HCT116 (cell line): ENCODE measurements at regions of chr12 and their contacts with region 1.

Region 1: DNA sequence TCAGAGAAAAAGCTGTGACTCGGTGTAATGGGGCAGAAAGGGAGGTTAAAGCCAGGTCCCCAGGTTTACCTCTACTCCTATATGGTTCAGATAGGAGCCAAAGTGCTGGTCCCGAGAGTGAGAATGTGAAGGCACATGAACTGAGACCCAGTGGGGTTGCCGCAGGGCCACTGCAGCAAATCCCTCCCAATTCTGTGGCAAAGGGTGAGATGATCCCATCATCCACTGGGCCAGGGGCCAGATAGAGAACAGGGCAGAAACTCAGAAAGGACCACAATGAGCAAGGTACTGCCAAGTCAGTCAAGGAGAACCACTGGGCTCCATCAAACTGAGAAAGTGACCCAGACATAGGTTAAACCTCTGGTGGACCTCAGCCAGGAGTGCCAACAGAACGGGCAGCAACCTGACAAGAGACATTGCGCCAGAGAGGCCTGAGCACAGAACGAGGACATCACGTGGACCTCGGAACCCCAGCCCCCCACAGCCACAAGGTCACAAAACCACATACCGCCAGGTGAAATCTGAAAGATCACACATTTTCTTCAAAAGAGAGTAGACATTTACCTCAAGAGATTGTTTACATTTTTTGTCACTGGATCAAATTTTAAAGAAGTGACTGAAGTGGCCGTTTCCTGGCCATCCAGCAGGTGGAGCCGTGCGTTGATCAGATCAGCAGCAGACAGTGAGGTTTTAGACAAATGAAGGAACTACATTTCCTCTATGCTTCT is 20.5 kb upstream of the ITPR2 start:
- DNase-seq: no peak
- ATAC-seq: peak; percentile 96
- H3K4me3 ChIP-seq: no peak overlapping the region
- H3K27ac ChIP-seq: no peak overlapping the region
- H3K4me1 ChIP-seq: 0 out of 4 replicates have a peak, but pooled peaks cover 0 to 3% of the 10 kb centered on the region in 2 experiments
- H3K27me3 ChIP-seq: no peaks in the 10 kb centered on the region
- CTCF ChIP-seq: peak; percentile 84 to 93 (median 91)
- POLR2A ChIP-seq: no peak
- RAD21 ChIP-seq: peak; percentile 75

Region 2: GRCh38 chr12:26884765-26885576 is 31.5 kb after region 1 on chr12:
- CTCF ChIA-PET with region 1: interaction called, 5 read pairs
- POLR2A ChIA-PET with region 1: no interaction called
- RAD21 ChIA-PET with region 1: no interaction called
- intact Hi-C with region 1: loop called (anchors 2 kb)
- DNase-seq: peak; percentile 51
- ATAC-seq: peak; percentile 97
- H3K4me3 ChIP-seq: no peak overlapping the region
- H3K27ac ChIP-seq: no peak overlapping the region
- H3K4me1 ChIP-seq: peaks cover 2 to 7% of the 10 kb centered on the region in 2 experiments; a peak in 2 of 4 replicates
- H3K27me3 ChIP-seq: no peaks in the 10 kb centered on the region
- CTCF ChIP-seq: peak; percentile 77 to 97 (median 88)
- POLR2A ChIP-seq: no peak
- RAD21 ChIP-seq: peak; percentile 75

Region 3: GRCh38 chr12:27142101-27142721 is 288.7 kb after region 1 on chr12:
- CTCF ChIA-PET with region 1: no interaction called
- POLR2A ChIA-PET with region 1: no interaction called
- RAD21 ChIA-PET with region 1: no interaction called
- intact Hi-C with region 1: loop called (anchors 5 kb)
- DNase-seq: peak; percentile 60
- ATAC-seq: peak; percentile 98
- H3K4me3 ChIP-seq: no peak overlapping the region
- H3K27ac ChIP-seq: no peak overlapping the region
- H3K4me1 ChIP-seq: no peaks in the 10 kb centered on the region
- H3K27me3 ChIP-seq: no peaks in the 10 kb centered on the region
- CTCF ChIP-seq: peak; percentile 62 to 86 (median 85); a peak in 5 of 6 replicates
- POLR2A ChIP-seq: no peak
- RAD21 ChIP-seq: peak; percentile 75

Region 4: GRCh38 chr12:27703710-27704452 is 850.4 kb after region 1 on chr12:
- CTCF ChIA-PET with region 1: no interaction called
- POLR2A ChIA-PET with region 1: no interaction called
- RAD21 ChIA-PET with region 1: no interaction called
- intact Hi-C with region 1: loop called (anchors 10 kb)
- DNase-seq: peak; percentile 87
- ATAC-seq: peak; percentile 99
- H3K4me3 ChIP-seq: no peak overlapping the region
- H3K27ac ChIP-seq: no peak overlapping the region
- H3K4me1 ChIP-seq: no peaks in the 10 kb centered on the region
- H3K27me3 ChIP-seq: no peaks in the 10 kb centered on the region
- CTCF ChIP-seq: peak; percentile 73 to 97 (median 89)
- POLR2A ChIP-seq: no peak
- RAD21 ChIP-seq: peak; percentile 86